ENCODE measurements at regions of chr12 and their contacts with region 1.

Region 1: GRCh38 chr12:6195665-6196535 is 4.3 kb upstream of the CD9 start:
- DNase-seq: peak; percentile 52 to 97 (median 88)

Region 2: DNA sequence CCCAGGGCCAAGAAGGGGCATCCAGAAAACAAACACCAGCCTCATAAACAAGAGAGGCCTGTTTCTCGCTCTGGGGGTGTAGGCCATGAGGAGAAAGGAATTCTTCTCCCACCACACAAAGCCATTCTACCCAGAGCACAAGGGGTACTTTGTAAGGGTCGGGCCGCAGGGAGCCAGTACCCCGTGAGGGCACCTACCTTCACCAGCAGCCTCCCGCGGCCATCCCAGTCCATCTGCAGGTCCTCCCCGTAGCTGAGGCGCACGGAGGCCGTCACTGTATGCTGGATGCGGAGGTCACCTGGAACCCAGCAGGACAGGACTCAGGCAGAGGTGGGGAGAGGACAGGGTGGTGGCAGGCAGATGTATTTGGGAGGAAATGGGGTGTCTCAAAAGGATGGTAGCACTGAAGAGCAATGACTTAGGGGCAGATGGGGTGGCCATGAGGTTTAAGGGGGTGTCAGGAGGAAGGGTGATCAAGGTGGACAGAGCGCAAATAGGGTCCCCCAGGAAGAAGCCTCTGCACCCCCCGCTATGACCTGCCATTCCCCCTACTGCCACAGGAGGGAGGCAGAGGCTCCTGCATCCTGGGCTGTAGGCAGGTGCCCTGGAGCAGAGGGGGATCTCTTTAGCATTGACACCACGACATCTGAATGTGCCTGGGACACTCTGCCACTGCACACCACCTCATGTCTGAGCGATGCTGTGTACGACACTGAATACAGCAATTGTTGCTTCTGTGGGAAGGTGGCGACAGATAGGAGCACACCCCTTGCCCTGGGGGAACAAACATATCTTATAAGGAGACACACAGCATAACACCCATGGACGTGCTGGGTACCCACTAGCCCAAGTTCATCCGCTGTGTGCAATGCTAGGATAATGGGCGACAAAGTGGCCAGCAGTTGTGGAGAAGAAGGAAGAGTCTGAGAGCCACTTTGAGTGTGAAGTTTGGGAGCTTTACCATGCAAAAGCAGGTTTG is 132.9 kb before region 1 on chr12:
- intact Hi-C with region 1: loop called (anchors 10 kb)
- DNase-seq: peak; percentile 30 to 89 (median 76)

Region 3: DNA sequence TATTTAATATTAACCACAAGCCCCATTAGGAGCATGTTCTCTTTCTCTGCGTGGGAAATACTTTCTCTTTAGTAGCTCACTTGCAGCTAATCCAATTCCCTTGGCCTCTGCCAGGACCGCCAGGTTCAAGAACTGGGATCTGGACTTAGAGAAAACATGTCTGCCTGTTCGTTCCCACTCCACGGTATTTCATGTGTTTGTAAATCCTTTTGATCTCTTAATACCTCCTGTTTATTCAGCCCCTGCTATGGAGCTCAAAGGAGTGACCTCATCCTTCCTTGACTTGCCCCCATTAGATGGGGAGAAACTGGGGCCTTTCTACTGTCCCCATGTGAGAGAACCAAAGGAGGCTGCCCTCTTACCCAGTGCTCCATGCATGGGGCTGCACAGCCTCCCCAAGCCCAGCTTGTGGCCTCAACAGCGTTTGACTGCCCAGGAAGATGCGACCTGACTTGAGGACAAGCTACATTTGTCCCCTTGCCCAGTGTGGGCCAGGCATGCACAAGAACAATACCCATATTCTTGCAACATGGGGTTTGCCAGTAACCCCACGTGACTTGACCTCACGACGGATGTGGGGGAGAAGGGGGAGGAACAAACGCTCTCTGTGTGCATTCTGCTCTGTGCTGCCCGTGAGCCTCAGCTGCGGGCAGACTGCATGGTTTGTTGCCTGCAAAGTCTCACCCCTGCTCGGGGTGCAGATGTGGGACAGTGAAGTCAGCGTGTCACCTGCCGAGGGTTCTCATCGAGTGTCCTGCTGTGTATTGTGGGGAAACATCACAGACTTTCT is 34.6 kb after region 1 on chr12:
- intact Hi-C with region 1: loop called (anchors 5 kb)
- DNase-seq: peak; percentile 76 to 98 (median 92)

Region 4: GRCh38 chr12:6278439-6279255 is 82.7 kb after region 1 on chr12:
- intact Hi-C with region 1: loop called (anchors 2 kb)
- DNase-seq: peak; percentile 22 to 92 (median 84)